ENCODE measurements at regions of chr7 and their contacts with region 1.

Region 1: GRCh38 chr7:4681886-4682620 is at the start of gene FOXK1:
- DNase-seq: peak; percentile 55 to 60
- ATAC-seq: peak; percentile 76
- H3K4me3 ChIP-seq: peak within 1 kb of the TSS; percentile 76 to 82 (median 80)
- H3K27ac ChIP-seq: peak within 1 kb of the TSS; percentile 92 to 97 (median 95)
- H3K4me1 ChIP-seq: peaks cover 19 to 28% of the 10 kb centered on the region in 2 donors
- H3K27me3 ChIP-seq: no peaks in the 10 kb centered on the region
- CTCF ChIP-seq: peak in 1 of 5 experiments; percentile 17
- POLR2A ChIP-seq: peak; percentile 48 to 53
- total RNA-seq, gene FOXK1: 9.8 to 43.6 (median 18.8) TPM

Region 2: GRCh38 chr7:4307316-4308204 is 374.5 kb before region 1 on chr7:
- in situ Hi-C with region 1: no loop called
- intact Hi-C with region 1: no loop called
- DNase-seq: no peak
- ATAC-seq: no peak
- H3K4me3 ChIP-seq: no peak overlapping the region
- H3K27ac ChIP-seq: no peak overlapping the region
- H3K4me1 ChIP-seq: no peaks in the 10 kb centered on the region
- H3K27me3 ChIP-seq: no peaks in the 10 kb centered on the region
- CTCF ChIP-seq: no peak
- POLR2A ChIP-seq: no peak

Region 3: DNA sequence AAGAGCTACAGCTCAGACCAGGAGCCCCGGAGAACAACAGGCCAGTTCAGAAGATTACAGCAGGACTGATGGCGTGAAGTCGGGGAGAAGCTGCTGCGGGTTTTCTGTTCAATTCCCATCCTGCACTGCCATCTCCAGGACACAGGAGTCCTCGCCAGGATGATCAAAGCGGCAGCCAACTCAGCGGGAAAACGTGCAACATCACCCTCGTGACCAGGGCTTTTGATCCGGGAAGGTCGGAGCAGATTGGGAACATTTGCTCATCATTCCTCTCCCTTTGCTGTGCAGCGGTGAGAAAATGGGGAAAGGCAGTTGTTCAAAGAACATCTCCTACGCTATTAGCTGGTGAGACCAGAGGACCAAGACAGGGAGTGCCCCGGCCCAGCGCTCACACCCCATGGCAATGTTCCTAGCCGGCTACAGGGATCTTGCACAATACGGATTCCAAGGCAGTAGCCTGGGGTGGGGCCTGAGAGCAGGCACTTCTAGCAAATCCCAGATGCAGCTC is 50.3 kb before region 1 on chr7:
- in situ Hi-C with region 1: loop called in 2 of 4 experiments (anchors 5 kb)
- intact Hi-C with region 1: no loop called
- DNase-seq: peak; percentile 72 to 85
- ATAC-seq: peak; percentile 96 to 98
- H3K4me3 ChIP-seq: peak overlapping the region; percentile 31 to 46 (median 40)
- H3K27ac ChIP-seq: peak overlapping the region; percentile 58 to 74 (median 64)
- H3K4me1 ChIP-seq: peaks cover 10 to 13% of the 10 kb centered on the region in 2 donors
- H3K27me3 ChIP-seq: no peaks in the 10 kb centered on the region
- CTCF ChIP-seq: peak; percentile 64 to 80 (median 75)
- POLR2A ChIP-seq: no peak

Region 4: DNA sequence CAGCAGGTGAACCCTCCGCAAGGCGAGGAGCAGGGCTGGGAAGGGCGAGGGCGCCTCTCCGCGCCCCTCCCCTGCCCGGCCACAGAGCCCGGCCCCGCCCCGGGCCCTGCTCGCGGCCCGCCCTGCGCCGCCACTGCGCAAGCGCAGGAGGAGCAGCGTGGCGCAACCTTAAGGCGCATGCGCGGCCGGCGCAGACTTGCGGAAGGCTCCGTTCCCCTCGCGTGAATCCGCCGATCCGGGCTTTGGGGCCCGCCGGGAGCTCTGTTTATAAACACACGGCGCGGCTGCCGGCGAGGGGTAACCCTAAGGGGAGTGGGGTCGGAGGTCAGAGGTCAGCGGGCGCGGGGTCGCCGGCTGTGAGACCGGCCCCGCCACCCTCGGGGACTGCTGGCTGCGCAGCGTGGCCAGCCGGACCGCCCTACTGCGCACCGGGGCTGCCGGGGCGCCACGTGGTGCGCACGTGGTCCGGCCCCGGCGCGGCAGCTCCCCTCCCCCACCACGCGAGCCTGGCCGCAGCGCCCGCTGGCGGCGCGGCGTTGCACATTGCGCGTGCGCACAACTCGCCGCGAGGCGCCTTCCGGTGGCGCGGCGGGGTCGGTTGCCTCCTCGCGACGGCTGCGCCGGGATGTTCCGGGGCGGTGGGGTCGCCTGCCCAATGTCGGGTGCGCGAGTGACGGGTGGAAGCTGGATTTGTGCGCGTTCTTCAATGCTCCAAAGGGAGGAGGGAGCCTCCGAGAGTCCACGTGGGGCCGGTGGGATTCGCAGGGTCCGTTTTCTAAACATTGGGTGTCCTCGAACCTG is 40.2 kb before region 1 on chr7:
- in situ Hi-C with region 1: loop called in 1 of 4 experiments (anchors 5 kb)
- intact Hi-C with region 1: loop called (anchors 1 kb)
- DNase-seq: peak; percentile 82 to 91
- ATAC-seq: peak; percentile 93 to 94
- H3K4me3 ChIP-seq: peak overlapping the region; percentile 63 to 90 (median 76)
- H3K27ac ChIP-seq: peak overlapping the region; percentile 79 to 92 (median 85)
- H3K4me1 ChIP-seq: peaks cover 0 to 4% of the 10 kb centered on the region in 2 donors
- H3K27me3 ChIP-seq: no peaks in the 10 kb centered on the region
- CTCF ChIP-seq: peak in 4 of 5 experiments; percentile 28 to 66 (median 60)
- POLR2A ChIP-seq: peak; percentile 55 to 57

Region 5: GRCh38 chr7:4692055-4692454 is 10.0 kb after region 1 on chr7:
- in situ Hi-C with region 1: no loop called
- intact Hi-C with region 1: no loop called
- DNase-seq: no peak
- ATAC-seq: no peak
- H3K4me3 ChIP-seq: no peak overlapping the region
- H3K27ac ChIP-seq: peak overlapping the region in 3 of 4 donors; percentile 3 to 98 (median 32)
- H3K4me1 ChIP-seq: peaks cover 59 to 75% of the 10 kb centered on the region in 2 donors
- H3K27me3 ChIP-seq: no peaks in the 10 kb centered on the region
- CTCF ChIP-seq: no peak
- POLR2A ChIP-seq: no peak

Region 6: DNA sequence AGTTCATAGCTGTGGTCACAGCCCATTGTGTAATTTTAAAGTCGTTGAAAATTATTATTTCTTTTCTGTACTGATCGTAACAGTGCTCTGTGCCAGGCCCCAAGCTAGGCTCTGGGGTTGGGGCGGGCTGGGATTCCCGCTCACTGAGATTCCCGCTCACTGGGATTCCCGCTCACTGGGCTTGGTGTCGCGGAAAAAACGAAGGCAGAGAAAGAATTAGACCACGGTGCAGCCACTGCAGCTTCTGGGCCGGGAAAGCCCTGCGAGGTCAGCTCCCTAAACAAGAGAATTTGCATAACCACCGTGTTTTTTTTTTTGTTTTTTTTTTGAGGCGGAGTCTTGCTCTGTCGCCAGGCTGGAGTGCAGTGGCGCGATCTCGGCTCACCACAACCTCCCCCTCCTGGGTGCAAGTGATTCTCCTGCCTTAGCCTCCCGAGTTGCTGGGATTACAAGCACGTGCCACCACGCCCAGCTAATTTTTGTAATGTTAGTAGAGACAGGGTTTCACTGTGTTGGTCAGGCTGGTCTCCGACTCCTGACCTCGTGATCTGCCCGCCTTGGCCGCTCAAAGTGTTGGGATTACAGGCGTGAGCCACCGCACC is 31.2 kb after region 1 on chr7:
- in situ Hi-C with region 1: no loop called
- intact Hi-C with region 1: no loop called
- DNase-seq: no peak
- ATAC-seq: no peak
- H3K4me3 ChIP-seq: no peak overlapping the region
- H3K27ac ChIP-seq: peak overlapping the region; percentile 78 to 88 (median 83)
- H3K4me1 ChIP-seq: peaks cover 41 to 53% of the 10 kb centered on the region in 2 donors
- H3K27me3 ChIP-seq: no peaks in the 10 kb centered on the region
- CTCF ChIP-seq: no peak
- POLR2A ChIP-seq: no peak

Region 7: DNA sequence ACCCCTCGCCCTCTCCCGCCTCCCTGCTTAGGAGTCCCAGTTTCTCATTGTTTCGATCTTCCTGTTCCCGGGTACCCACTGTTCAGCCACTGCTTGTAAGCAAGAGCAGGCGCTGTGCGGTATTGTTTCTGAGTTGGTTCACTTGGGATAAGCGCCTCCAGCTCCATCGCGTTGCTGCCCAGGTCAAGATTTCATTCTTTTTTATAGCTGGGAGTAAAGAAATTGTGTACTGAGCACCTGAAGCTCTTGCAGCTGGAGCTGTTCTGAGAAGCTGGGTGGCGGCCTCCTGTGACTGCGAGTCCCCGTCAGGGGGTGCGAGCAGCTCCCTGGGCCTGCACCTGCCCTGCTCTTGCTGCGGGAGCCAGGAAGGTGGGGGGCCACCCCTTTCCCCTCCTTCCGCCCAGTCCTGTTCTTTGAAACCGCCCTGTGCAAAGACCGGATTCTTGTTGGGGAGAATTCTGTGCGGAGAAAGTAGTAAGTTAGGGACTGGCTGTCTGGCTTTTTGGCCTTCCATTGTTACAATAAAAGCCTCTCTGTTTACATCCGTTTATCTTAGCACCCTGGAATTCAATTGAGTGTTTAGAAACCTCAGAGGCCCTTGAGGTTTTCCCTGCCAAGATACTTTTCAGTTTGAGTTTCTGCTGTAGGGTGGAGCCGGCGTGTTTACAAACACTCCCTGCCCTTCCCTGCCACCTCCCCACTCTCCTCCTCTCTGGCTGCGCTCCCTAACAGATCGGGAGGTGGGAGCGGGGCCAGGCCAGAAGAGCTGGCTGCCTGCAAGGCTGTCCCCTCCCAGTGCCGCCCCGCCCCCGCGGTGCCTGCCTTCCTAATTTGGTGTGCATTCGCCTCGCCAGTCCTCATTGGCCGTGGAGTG is 62.6 kb after region 1 on chr7:
- in situ Hi-C with region 1: loop called in 2 of 4 experiments (anchors 10 kb)
- intact Hi-C with region 1: loop called (anchors 2 kb)
- DNase-seq: peak; percentile 98 to 99
- ATAC-seq: peak; percentile 91 to 93
- H3K4me3 ChIP-seq: peak overlapping the region; percentile 34 to 46 (median 38)
- H3K27ac ChIP-seq: peak overlapping the region; percentile 88 to 94 (median 92)
- H3K4me1 ChIP-seq: peaks cover 31 to 44% of the 10 kb centered on the region in 2 donors
- H3K27me3 ChIP-seq: no peaks in the 10 kb centered on the region
- CTCF ChIP-seq: peak in 1 of 5 experiments; percentile 17
- POLR2A ChIP-seq: peak; percentile 53 to 79

Region 8: DNA sequence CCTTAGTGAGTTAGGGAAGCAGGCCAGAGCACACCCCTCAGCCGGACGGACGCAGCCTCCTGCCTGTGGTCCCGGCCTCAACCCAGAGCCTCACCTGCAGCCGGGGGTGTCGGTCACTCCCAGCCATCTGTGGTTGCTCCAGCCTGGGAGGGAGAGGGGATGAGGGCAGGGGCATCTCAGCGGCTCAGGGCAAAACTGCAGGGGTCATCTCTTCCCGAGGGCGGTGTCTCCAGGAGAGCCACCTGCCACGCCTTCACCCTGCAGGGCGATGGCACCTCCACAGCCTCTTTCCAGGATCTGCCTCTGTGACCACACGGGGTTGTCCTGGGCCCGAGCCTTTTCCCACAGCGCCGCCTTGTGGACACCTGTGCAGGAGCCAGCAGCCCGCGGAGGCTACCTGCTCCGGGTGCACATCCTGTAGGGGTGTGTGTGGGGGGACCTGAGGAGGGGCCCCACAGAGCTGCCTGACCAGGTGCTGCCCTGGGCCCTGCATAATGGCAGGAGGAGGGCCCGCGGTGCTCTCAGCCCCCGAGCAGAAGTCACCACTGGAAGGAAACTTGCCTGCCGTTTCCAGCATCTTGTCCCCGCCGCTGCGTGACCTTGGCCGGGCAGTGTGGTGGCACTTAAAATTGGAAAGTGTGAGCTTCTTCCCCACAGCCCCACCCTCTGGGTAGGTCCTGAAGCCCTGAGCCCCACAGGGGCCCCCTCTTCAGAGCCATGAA is 71.8 kb after region 1 on chr7:
- in situ Hi-C with region 1: loop called in 3 of 4 experiments (anchors 5 to 10 kb)
- intact Hi-C with region 1: loop called (anchors 2 kb)
- DNase-seq: peak; percentile 65 to 66
- ATAC-seq: peak; percentile 87 to 95
- H3K4me3 ChIP-seq: no peak overlapping the region
- H3K27ac ChIP-seq: no peak overlapping the region
- H3K4me1 ChIP-seq: no peaks in the 10 kb centered on the region
- H3K27me3 ChIP-seq: no peaks in the 10 kb centered on the region
- CTCF ChIP-seq: peak; percentile 82 to 96 (median 95)
- POLR2A ChIP-seq: no peak

Region 9: DNA sequence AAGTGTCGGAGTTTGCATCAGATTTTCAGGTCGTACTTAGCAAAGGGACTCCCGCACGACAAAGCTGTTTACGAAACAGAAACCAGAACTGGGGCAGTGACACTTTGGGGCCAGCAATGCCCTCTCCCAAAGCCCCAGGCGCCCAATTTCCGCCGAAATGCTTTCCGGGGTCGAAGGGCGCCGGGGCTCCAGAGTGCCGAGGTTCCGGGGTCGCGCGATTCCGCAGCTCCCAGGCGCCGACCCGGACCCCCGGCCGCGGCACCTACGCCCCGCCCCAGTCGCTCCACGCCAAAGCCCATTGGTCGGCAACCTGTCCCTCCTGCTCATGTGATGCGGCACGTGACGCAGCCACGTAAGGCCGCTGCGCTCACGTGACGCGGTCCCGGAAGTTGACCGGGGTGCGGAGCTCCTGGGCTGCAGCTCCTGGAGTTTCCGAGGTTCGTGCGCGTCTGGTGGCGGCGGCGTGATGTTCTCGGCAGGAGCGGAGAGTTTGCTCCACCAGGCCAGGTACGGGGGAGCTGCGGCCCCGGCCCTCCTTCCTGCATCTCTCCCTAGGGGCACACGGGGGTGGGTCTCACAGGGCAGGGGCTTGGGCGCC is 93.3 kb after region 1 on chr7 and contains the start of gene AP5Z1:
- in situ Hi-C with region 1: no loop called
- intact Hi-C with region 1: loop called (anchors 5 kb)
- DNase-seq: peak; percentile 95
- ATAC-seq: peak; percentile 92 to 96
- H3K4me3 ChIP-seq: peak within 1 kb of the TSS; percentile 95 to 99 (median 98)
- H3K27ac ChIP-seq: peak within 1 kb of the TSS; percentile 91 to 98 (median 92)
- H3K4me1 ChIP-seq: peaks cover 14 to 22% of the 10 kb centered on the region in 2 donors
- H3K27me3 ChIP-seq: no peaks in the 10 kb centered on the region
- CTCF ChIP-seq: no peak
- POLR2A ChIP-seq: peak; percentile 81 to 89
- total RNA-seq, gene AP5Z1: 10.2 to 18.1 (median 14.6) TPM

Measured in gastrocnemius medialis (tissue), 4 donors.